Heart right ventricle (tissue), 16 donors: ENCODE measurements at regions of chr5 and their contacts with region 1.

Region 1: GRCh38 chr5:14405267-14405666 is 176.3 kb upstream of the OTULINL start:
- DNase-seq: no peak
- ATAC-seq: no peak
- H3K4me3 ChIP-seq: no peak overlapping the region
- H3K27ac ChIP-seq: no peak overlapping the region
- H3K4me1 ChIP-seq: peaks cover 2 to 69% (median 30%) of the 10 kb centered on the region in 9 donors
- H3K27me3 ChIP-seq: no peaks in the 10 kb centered on the region
- CTCF ChIP-seq: peak in 4 of 9 donors; percentile 8 to 43 (median 31)

Region 2: GRCh38 chr5:14440582-14441431 is 35.5 kb after region 1 on chr5:
- intact Hi-C with region 1: loop called in 4 of 10 experiments (anchors 5 kb)
- DNase-seq: peak; percentile 62 to 63
- ATAC-seq: peak; percentile 86 to 95 (median 90)
- H3K4me3 ChIP-seq: peak overlapping the region in 9 of 10 donors; percentile 27 to 61 (median 55)
- H3K27ac ChIP-seq: peak overlapping the region; percentile 26 to 82 (median 68)
- H3K4me1 ChIP-seq: peaks cover 4 to 43% (median 23%) of the 10 kb centered on the region in 9 donors
- H3K27me3 ChIP-seq: no peaks in the 10 kb centered on the region
- CTCF ChIP-seq: no peak

Region 3: DNA sequence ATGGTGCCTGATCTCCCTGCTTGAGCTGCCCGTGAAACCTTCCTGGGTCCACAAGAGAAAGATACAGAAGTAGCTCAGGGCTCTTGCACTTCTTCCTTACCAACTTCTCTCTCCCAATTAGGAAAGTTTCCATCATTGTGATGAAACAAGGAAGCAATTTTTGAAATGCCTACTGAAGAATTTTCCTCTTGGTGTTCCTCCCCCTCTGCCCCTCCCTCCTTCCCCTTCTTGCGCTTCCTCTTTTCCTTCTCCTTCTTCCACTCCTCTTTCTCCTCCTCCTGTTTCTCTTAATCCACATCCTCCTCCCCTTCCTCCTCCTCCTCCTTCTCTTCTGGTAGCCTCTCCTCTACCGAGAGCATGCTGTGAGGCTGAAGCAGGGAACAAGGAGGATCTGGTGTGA is 140.0 kb after region 1 on chr5:
- intact Hi-C with region 1: no loop called
- DNase-seq: no peak
- ATAC-seq: peak in 7 of 8 donors; percentile 37 to 71 (median 58)
- H3K4me3 ChIP-seq: no peak overlapping the region
- H3K27ac ChIP-seq: peak overlapping the region in 1 of 10 donors; percentile 45
- H3K4me1 ChIP-seq: peaks cover 0 to 25% (median 0%) of the 10 kb centered on the region in 9 donors
- H3K27me3 ChIP-seq: peaks cover 0 to 17% (median 6%) of the 10 kb centered on the region in 7 donors
- CTCF ChIP-seq: no peak

Region 4: GRCh38 chr5:14581333-14581890 is 176.1 kb after region 1 on chr5 and contains the start of gene OTULINL:
- intact Hi-C with region 1: loop called in 1 of 10 experiments (anchors 10 kb)
- DNase-seq: peak; percentile 90 to 91
- ATAC-seq: peak; percentile 95 to 98 (median 97)
- H3K4me3 ChIP-seq: peak within 1 kb of the TSS; percentile 60 to 84 (median 66)
- H3K27ac ChIP-seq: peak within 1 kb of the TSS in 6 of 10 donors; percentile 22 to 94 (median 59)
- H3K4me1 ChIP-seq: peaks cover 0 to 58% (median 14%) of the 10 kb centered on the region in 9 donors
- H3K27me3 ChIP-seq: peaks cover 0 to 36% (median 23%) of the 10 kb centered on the region in 7 donors
- CTCF ChIP-seq: no peak
- total RNA-seq, gene OTULINL: 0.80 to 9.5 (median 1.9) TPM